ENCODE measurements at regions of chr5 and their contacts with region 1.

Region 1: DNA sequence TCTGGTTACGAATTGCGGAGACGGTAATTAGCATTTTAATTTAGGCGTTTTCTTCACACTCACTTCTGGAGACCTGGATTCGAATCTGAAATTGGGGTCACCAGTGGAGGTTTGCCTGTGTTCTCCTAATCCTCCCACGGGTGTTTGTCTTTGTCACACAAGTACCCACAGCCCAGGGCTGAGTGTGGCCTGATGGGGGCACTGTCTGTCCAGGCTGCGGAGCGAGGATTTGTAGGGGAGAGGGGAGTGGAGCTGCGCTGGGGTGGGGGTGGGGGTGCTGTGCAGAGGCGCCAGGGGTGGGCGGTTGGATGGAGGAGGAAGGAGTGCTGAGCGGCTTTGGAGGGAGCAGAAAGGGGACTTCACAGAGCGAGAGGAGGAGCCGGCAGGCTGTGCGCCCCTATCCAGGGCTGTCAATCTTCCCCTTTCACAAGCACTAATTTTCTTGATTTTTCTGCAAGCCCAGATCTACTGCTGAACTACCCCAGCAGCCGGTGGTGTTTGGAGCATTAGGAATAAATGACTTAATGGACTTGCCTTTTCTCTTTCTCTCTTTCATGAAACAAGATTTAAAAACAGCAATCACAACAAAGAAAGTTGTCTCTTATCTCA is 53.1 kb downstream of the TSPAN17 start:
- DNase-seq: peak; percentile 47 to 79
- H3K4me3 ChIP-seq: peak overlapping the region in 1 of 4 experiments; percentile 18; a peak in 1 of 8 replicates
- H3K27ac ChIP-seq: no peak overlapping the region
- H3K4me1 ChIP-seq: peaks cover 13 to 36% (median 25%) of the 10 kb centered on the region in 4 experiments
- H3K27me3 ChIP-seq: no peaks in the 10 kb centered on the region; a peak in 1 of 7 replicates
- CTCF ChIP-seq: peak in 2 of 3 experiments; percentile 76 to 82; a peak in 3 of 4 replicates
- EP300 ChIP-seq: no peak
- POLR2A ChIP-seq: no peak
- RAD21 ChIP-seq: peak; percentile 87 to 93

Region 2: DNA sequence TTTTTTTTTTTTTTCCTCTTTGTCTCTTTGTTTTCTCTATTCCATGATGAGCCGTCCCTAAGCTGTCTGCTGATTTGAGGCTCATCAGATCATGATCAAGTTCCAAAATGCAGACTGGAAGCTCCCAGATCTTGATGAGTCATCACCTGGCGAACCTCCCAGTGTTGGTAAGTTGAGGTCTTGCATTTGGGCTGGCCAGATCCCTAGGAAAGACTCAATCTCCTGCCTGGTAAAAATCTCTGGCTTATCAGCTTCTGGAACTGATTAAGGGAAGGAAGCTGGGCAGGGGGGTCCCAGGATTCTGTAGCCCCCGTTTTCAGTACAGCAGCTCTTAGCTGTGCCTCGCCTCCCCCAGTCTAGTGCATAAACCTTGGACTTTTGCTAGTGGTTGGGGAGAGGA is 16.0 kb after region 1 on chr5:
- CTCF ChIA-PET with region 1: interaction called, 69 read pairs
- POLR2A ChIA-PET with region 1: no interaction called
- DNase-seq: no peak
- H3K4me3 ChIP-seq: no peak overlapping the region
- H3K27ac ChIP-seq: no peak overlapping the region
- H3K4me1 ChIP-seq: peaks cover 0 to 11% (median 5%) of the 10 kb centered on the region in 4 experiments; a peak in 4 of 7 replicates
- H3K27me3 ChIP-seq: no peaks in the 10 kb centered on the region; a peak in 2 of 7 replicates
- CTCF ChIP-seq: no peak
- EP300 ChIP-seq: no peak
- POLR2A ChIP-seq: no peak
- RAD21 ChIP-seq: no peak

Region 3: DNA sequence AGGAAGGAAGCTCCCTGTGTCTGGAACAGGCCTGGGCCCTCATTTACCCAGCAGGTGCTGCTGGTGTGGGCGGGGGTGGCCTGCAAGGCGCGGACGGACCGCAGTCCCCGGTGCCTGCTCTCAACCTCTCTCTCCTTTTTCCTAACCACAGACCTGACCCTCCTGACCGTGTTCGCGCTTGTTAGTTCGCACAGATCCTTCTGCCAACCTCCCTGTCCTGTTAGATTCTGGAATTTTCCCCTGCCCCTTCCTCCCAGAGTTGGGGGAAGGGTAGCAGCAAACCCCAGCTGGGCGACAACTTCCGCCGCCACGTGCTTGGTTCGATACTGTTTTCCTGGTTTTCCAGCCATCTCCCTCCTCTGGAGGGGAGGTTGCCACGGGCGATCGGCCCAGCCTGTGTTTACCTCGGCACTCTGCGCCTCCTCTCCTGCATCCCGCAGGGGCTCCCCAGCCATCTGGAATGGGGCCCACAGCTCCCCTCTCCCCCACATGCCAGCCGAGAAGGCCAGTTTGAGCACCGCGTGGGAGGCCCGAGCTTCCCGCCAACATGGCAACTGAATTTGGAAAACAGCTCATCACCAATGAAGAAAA is 39.2 kb after region 1 on chr5:
- CTCF ChIA-PET with region 1: interaction called, 54 read pairs
- POLR2A ChIA-PET with region 1: interaction called, 3 read pairs
- DNase-seq: peak in 1 of 2 experiments; percentile 70
- H3K4me3 ChIP-seq: no peak overlapping the region
- H3K27ac ChIP-seq: no peak overlapping the region
- H3K4me1 ChIP-seq: peaks cover 7 to 33% (median 24%) of the 10 kb centered on the region in 4 experiments
- H3K27me3 ChIP-seq: peaks cover 0 to 25% (median 12%) of the 10 kb centered on the region in 4 experiments; a peak in 6 of 7 replicates
- CTCF ChIP-seq: no peak
- EP300 ChIP-seq: no peak
- POLR2A ChIP-seq: no peak
- RAD21 ChIP-seq: no peak

Region 4: GRCh38 chr5:176793337-176794138 is 93.2 kb after region 1 on chr5:
- CTCF ChIA-PET with region 1: interaction called, 10 read pairs
- POLR2A ChIA-PET with region 1: no interaction called
- DNase-seq: peak in 1 of 2 experiments; percentile 66
- H3K4me3 ChIP-seq: no peak overlapping the region
- H3K27ac ChIP-seq: no peak overlapping the region
- H3K4me1 ChIP-seq: peaks cover 0 to 17% (median 12%) of the 10 kb centered on the region in 4 experiments; a peak in 6 of 7 replicates
- H3K27me3 ChIP-seq: peaks cover 0 to 2% (median 0%) of the 10 kb centered on the region in 4 experiments; a peak in 1 of 7 replicates
- CTCF ChIP-seq: no peak
- EP300 ChIP-seq: no peak
- POLR2A ChIP-seq: no peak
- RAD21 ChIP-seq: no peak

Region 5: DNA sequence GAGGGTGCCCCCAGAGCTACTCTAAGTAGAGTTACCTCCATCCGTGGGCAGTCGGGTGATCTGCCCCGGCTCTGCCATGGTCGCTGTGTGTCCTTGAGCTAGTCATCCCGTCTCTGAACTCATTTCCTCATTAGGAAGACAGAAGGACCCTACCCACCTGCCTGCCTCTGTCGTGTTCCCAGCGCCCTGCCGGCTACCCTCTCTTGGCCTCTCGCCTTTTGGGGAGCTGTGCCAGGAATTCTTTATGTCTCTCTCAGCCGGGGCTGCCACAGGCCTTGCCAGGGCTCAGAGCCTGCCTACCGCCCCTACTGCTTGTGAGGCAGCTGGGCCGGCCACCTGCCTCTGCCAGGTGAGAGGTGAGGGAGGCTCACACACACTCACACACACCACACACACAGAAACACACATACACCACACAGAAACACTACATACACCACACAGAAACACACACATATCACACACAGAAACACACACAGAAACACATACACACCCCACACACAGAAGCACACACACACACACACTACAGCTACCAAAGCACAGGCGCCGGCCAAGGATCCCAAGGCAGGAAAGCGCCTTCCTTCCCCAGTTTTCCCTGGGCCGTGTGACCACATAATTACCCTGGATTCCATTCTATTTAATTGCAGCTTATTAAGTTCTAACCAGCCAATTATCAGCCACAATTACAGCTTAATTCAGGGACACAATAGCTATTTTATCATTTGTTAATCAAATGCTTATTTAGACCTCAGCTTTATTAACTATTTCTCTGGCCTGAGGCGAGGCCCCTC is 151.7 kb after region 1 on chr5:
- CTCF ChIA-PET with region 1: interaction called, 10 read pairs
- POLR2A ChIA-PET with region 1: no interaction called
- DNase-seq: no peak
- H3K4me3 ChIP-seq: no peak overlapping the region
- H3K27ac ChIP-seq: no peak overlapping the region; the same call in 1 of the 2 replicates
- H3K4me1 ChIP-seq: peaks cover 0 to 1% (median under 1%) of the 10 kb centered on the region in 4 experiments; a peak in 2 of 7 replicates
- H3K27me3 ChIP-seq: no peaks in the 10 kb centered on the region
- CTCF ChIP-seq: no peak
- EP300 ChIP-seq: no peak
- POLR2A ChIP-seq: no peak
- RAD21 ChIP-seq: no peak

Measured in H1 (cell line).